Activated naive CD4-positive, alpha-beta T cell treated with anti-CD3 and anti-CD28 coated beads for 36 hours (primary cell): ENCODE measurements at regions of chr13 and their contacts with region 1.

Region 1: DNA sequence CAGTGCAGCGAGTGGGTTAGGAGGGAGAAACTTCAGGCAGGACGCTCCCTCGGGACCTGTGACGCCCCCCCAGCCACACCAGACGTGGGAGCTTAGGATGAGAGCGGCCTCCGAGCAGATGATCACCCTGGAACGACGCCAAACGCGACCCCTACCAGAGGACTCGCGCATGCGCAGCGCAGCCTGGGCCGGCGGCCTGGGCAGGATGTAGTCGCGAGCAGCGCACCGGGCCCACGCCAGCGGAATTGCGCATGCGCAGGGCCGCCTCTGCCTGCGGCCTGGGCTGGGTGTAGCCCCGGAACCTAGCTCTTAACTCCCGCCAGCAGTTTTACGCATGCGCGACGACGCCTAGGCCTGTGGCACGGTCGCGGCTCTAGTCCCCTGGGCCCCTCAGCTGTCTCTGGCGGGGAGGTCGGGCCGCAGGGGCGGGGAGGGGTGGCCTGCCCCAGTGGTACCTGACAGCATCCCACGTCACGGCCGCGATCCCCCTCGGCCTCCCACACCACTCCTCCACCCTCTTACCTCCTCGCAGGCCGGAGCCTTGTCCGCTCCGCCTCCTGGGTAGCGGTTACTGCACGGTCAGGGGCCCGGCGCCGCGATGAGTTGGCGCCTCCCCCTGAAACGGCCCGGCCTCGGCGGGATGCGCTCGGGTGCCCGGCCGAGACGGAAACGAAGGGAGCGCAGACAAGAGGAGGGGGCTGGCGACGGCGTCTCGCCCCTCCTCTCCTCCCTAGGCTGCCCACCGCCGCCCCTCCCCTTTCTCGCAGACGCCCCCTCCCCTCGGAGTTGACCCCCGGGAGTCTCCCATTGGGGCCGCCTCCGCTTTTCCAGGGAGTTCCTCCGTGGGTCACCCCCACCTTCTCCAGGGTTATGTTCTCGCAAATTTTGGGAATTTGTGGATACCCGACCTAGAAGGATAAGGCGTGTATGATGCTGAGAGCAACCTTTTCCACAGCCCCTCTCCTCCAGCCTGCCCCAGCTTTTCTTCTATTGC is at the start of gene RCBTB2:
- DNase-seq: peak; percentile 98
- H3K4me3 Mint-ChIP-seq: peak within 1 kb of the TSS; percentile 93
- H3K27ac Mint-ChIP-seq: peak within 1 kb of the TSS; percentile 97
- H3K4me1 Mint-ChIP-seq: peaks cover 17% of the 10 kb centered on the region
- H3K27me3 Mint-ChIP-seq: no peaks in the 10 kb centered on the region
- total RNA-seq, gene RCBTB2: 1.2 to 1.4 TPM

Region 2: GRCh38 chr13:48155848-48156247 is 377.0 kb before region 1 on chr13:
- CTCF ChIA-PET with region 1: no interaction called
- intact Hi-C with region 1: loop called (anchors 1 kb)
- DNase-seq: peak; percentile 44
- H3K4me3 Mint-ChIP-seq: peak overlapping the region; percentile 74
- H3K27ac Mint-ChIP-seq: peak overlapping the region; percentile 99
- H3K4me1 Mint-ChIP-seq: peaks cover 85% of the 10 kb centered on the region
- H3K27me3 Mint-ChIP-seq: no peaks in the 10 kb centered on the region

Region 3: DNA sequence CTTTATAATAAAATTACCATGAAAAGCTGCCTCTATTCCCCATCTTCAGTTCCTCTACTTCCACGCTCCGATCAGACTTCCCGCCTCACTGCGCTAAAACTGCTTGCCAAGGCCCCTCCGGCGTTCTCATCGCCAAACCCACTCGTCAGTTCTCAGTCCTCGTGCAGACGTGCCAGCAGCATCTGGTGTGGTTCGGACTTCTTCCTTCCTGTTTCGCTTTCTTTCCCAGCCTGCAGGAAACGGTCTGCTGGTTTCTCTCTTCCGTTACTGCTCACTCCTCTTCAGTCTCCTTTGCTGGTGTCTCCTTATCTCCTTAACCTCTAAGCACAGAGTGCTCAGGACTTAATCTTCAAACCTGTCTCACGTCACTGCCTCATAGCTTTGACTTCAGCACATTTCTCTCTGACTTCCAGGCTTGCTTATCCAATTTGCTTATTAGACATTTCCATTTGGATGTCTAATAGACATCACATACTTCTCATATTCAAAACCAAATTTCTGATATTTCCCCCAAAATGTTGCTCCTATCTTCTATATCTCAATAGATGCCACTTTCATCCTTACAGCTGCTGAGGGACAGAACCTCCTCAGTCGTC is 40.2 kb before region 1 on chr13:
- CTCF ChIA-PET with region 1: interaction called, 3 read pairs
- intact Hi-C with region 1: loop called (anchors 1 kb)
- DNase-seq: peak; percentile 74
- H3K4me3 Mint-ChIP-seq: no peak overlapping the region
- H3K27ac Mint-ChIP-seq: no peak overlapping the region
- H3K4me1 Mint-ChIP-seq: peaks cover 39% of the 10 kb centered on the region
- H3K27me3 Mint-ChIP-seq: no peaks in the 10 kb centered on the region

Region 4: DNA sequence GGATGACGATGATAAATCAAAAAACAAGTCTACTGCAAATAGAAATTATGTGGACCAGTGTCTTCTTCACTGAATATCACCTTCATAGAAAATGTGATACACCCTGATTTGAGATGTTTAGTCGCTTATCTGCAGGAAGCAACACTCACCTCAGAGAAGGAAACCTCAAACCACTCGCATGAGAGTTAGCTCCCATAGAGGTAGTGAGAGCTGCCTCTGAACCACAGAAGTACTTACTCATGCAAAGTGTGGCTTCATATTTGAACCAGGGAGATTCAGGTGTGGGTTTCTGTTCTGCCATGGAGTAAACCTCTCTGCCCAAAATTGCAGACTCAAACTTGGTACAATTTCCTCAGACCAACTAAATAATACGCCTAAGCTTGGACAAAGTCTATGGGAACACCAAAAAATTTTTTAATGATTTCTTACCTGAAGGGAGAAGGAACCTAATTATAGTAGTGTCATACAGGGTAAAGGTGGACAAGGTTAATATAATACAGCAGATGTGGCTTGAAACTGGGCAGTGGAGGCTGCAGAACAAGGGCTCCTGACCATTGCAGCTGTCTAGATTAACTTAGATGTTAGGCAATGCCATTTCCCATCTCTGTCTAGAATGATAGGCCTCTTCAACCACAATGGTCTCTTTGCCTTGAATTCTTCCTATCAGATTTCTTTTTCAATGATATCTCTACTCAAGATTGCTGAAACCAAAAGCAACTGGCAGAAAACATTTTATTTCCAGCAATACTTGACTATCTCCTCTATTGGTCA is 29.7 kb after region 1 on chr13:
- CTCF ChIA-PET with region 1: no interaction called
- intact Hi-C with region 1: loop called (anchors 2 kb)
- DNase-seq: peak; percentile 76
- H3K4me3 Mint-ChIP-seq: no peak overlapping the region
- H3K27ac Mint-ChIP-seq: no peak overlapping the region
- H3K4me1 Mint-ChIP-seq: peaks cover 23% of the 10 kb centered on the region
- H3K27me3 Mint-ChIP-seq: peaks cover 47% of the 10 kb centered on the region

Region 5: GRCh38 chr13:48828962-48829421 is 296.2 kb after region 1 on chr13:
- CTCF ChIA-PET with region 1: no interaction called
- intact Hi-C with region 1: loop called (anchors 5 kb)
- DNase-seq: peak; percentile 45
- H3K4me3 Mint-ChIP-seq: no peak overlapping the region
- H3K27ac Mint-ChIP-seq: no peak overlapping the region
- H3K4me1 Mint-ChIP-seq: peaks cover 48% of the 10 kb centered on the region
- H3K27me3 Mint-ChIP-seq: no peaks in the 10 kb centered on the region